Dendritic cell treated with granulocyte-macrophage colony-stimulating factor and Interleukin-4, amounts not matched to agents 40 ng/mL and 50 ng/mL, for 4 days (primary cell): ENCODE measurements at regions of chr1 and their contacts with region 1.

Region 1: GRCh38 chr1:153404768-153405167 is 11.6 kb upstream of the S100A7A start:
- H3K4me3 Mint-ChIP-seq: no peak overlapping the region
- H3K27ac Mint-ChIP-seq: no peak overlapping the region
- H3K4me1 Mint-ChIP-seq: peaks cover 45% of the 10 kb centered on the region
- H3K27me3 Mint-ChIP-seq: peaks cover 19% of the 10 kb centered on the region

Region 2: GRCh38 chr1:153352523-153352922 is 52.2 kb before region 1 on chr1:
- intact Hi-C with region 1: loop called (anchors 1 kb)
- H3K4me3 Mint-ChIP-seq: no peak overlapping the region
- H3K27ac Mint-ChIP-seq: no peak overlapping the region
- H3K4me1 Mint-ChIP-seq: peaks cover 36% of the 10 kb centered on the region
- H3K27me3 Mint-ChIP-seq: peaks cover 15% of the 10 kb centered on the region

Region 3: GRCh38 chr1:153390938-153391710 is 13.6 kb before region 1 on chr1 and contains the start of gene S100A8:
- intact Hi-C with region 1: loop called (anchors 2 kb)
- H3K4me3 Mint-ChIP-seq: peak within 1 kb of the TSS; percentile 42
- H3K27ac Mint-ChIP-seq: peak within 1 kb of the TSS; percentile 91
- H3K4me1 Mint-ChIP-seq: peaks cover 89% of the 10 kb centered on the region
- H3K27me3 Mint-ChIP-seq: peaks cover 2% of the 10 kb centered on the region

Region 4: GRCh38 chr1:153494976-153495535 is 90.3 kb after region 1 on chr1:
- intact Hi-C with region 1: loop called (anchors 5 kb)
- H3K4me3 Mint-ChIP-seq: no peak overlapping the region
- H3K27ac Mint-ChIP-seq: no peak overlapping the region
- H3K4me1 Mint-ChIP-seq: peaks cover 11% of the 10 kb centered on the region
- H3K27me3 Mint-ChIP-seq: peaks cover 14% of the 10 kb centered on the region